ENCODE measurements at regions of chr19 and their contacts with region 1.

Region 1: GRCh38 chr19:37466798-37467607 is at the start of gene ZNF569:
- DNase-seq: peak; percentile 93
- H3K4me3 ChIP-seq: peak within 1 kb of the TSS; percentile 59 to 77 (median 59)
- H3K27ac ChIP-seq: peak within 1 kb of the TSS; percentile 40
- H3K4me1 ChIP-seq: peaks cover 5% of the 10 kb centered on the region
- H3K27me3 ChIP-seq: no peaks in the 10 kb centered on the region
- CTCF ChIP-seq: no peak
- POLR2A ChIP-seq: peak; percentile 73
- total RNA-seq, gene ZNF569: 4.4 and 5.4 TPM in 2 replicates

Region 2: DNA sequence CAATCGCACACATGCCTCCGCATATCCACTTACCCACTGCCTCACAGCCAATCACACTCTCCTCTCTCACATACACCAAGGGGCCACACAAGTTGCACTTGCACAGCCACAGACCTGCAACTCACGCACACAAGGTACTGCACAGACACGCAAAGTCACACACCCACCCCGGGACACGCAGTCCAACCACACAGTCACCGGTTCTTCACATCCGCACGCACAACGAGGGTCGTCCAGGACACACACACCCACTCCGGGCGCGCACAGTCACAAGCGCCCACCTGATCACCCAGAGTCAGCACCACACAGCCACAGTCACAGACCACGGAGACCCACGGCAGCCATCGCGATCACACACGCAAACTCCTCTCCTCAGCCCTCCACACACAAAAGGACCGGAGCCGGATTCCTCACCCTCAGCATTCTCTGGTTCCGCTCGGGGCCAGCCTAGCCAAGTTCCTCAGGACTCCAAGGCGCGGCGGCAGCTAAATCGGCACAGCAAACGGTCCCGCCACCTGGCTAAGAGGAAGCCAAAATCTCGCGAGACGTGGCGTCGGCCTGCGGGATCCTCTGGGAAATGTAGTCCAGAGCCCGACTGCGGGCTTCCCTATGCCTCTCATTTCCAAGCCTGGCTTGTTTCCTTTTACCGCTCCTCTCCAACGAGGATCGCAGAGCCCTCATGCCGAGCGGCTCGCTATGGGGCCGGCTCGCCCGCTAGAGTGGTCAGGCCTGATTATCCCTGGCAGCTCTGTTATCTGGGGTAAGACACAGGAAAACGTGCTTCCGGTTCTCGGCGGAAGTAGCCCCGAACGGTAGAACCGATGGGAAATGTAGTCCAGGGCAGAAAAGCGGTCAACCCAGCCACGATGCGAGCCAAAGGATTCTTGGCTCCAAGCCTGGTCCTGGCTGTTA is 694.4 kb before region 1 on chr19 and contains the start of gene ZNF850:
- CTCF ChIA-PET with region 1: no interaction called
- POLR2A ChIA-PET with region 1: no interaction called
- dilution Hi-C with region 1: no loop called
- intact Hi-C with region 1: loop called (anchors 5 kb)
- DNase-seq: peak; percentile 92
- H3K4me3 ChIP-seq: peak within 1 kb of the TSS; percentile 31 to 76 (median 40)
- H3K27ac ChIP-seq: peak within 1 kb of the TSS; percentile 33
- H3K4me1 ChIP-seq: peaks cover 11% of the 10 kb centered on the region
- H3K27me3 ChIP-seq: no peaks in the 10 kb centered on the region
- CTCF ChIP-seq: no peak
- POLR2A ChIP-seq: no peak
- total RNA-seq, gene ZNF850: 3.6 and 4.5 TPM in 2 replicates

Region 3: DNA sequence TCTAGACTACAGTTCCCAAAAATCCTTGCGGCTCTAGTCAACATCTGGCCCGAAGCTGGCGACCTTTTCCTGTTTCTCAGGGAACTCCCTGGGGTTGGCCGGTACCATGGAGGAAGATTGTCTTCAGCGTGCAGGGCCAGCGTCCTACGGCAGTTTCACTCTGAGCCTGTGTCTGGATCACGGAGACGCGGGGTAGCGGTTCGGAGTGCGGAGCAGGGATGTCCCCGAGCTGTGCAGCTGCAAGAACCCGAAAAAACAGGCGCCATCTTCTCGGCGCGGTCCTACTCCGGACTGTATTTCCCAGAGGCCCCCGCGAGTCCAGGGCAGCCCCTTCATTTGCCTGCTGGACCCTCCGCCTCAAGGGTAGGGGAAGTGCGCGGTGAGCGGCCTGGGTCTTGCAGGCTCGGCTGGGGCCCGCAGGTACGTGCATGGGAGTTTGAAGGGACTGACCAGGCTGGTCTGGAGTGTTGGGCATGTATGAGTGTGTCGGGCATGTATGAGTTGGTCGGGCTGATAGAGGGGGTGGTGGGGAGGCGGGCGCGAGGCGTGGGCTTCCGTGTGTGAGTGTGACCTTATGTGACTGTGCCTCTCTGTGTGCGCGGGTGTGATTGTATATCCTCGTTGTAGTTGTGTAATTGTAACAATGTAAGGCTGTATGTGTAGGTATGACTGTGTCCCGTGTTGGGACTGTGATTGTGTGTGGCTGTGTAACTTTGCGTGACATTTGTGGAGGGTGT is 249.0 kb before region 1 on chr19 and contains the start of gene ZNF383:
- CTCF ChIA-PET with region 1: no interaction called
- POLR2A ChIA-PET with region 1: no interaction called
- dilution Hi-C with region 1: no loop called
- intact Hi-C with region 1: loop called (anchors 1 kb)
- DNase-seq: peak; percentile 92
- H3K4me3 ChIP-seq: peak within 1 kb of the TSS; percentile 51 to 89 (median 56)
- H3K27ac ChIP-seq: peak within 1 kb of the TSS; percentile 39
- H3K4me1 ChIP-seq: peaks cover 5% of the 10 kb centered on the region
- H3K27me3 ChIP-seq: no peaks in the 10 kb centered on the region
- CTCF ChIP-seq: no peak
- POLR2A ChIP-seq: peak; percentile 58
- total RNA-seq, gene ZNF383: 4.9 and 7.1 TPM in 2 replicates

Region 4: GRCh38 chr19:37303591-37304550 is 163.1 kb before region 1 on chr19:
- CTCF ChIA-PET with region 1: no interaction called
- POLR2A ChIA-PET with region 1: no interaction called
- dilution Hi-C with region 1: no loop called
- intact Hi-C with region 1: no loop called
- DNase-seq: no peak
- H3K4me3 ChIP-seq: peak overlapping the region in 1 of 3 experiments; percentile 30
- H3K27ac ChIP-seq: no peak overlapping the region
- H3K4me1 ChIP-seq: no peaks in the 10 kb centered on the region
- H3K27me3 ChIP-seq: no peaks in the 10 kb centered on the region
- CTCF ChIP-seq: no peak
- POLR2A ChIP-seq: no peak

Region 5: GRCh38 chr19:37370880-37371661 is 95.9 kb before region 1 on chr19 and contains the start of gene ZNF527:
- CTCF ChIA-PET with region 1: interaction called, 4 read pairs
- POLR2A ChIA-PET with region 1: interaction called, 5 read pairs
- dilution Hi-C with region 1: no loop called
- intact Hi-C with region 1: loop called (anchors 2 kb)
- DNase-seq: peak; percentile 98
- H3K4me3 ChIP-seq: peak within 1 kb of the TSS; percentile 13 to 89 (median 72)
- H3K27ac ChIP-seq: peak within 1 kb of the TSS; percentile 14
- H3K4me1 ChIP-seq: no peaks in the 10 kb centered on the region
- H3K27me3 ChIP-seq: no peaks in the 10 kb centered on the region
- CTCF ChIP-seq: no peak
- POLR2A ChIP-seq: peak; percentile 74
- total RNA-seq, gene ZNF527: 3.4 and 3.6 TPM in 2 replicates

Region 6: GRCh38 chr19:37413243-37414084 is 53.5 kb before region 1 on chr19:
- CTCF ChIA-PET with region 1: no interaction called
- POLR2A ChIA-PET with region 1: no interaction called
- dilution Hi-C with region 1: no loop called
- intact Hi-C with region 1: no loop called
- DNase-seq: peak; percentile 28
- H3K4me3 ChIP-seq: no peak overlapping the region
- H3K27ac ChIP-seq: no peak overlapping the region
- H3K4me1 ChIP-seq: no peaks in the 10 kb centered on the region
- H3K27me3 ChIP-seq: no peaks in the 10 kb centered on the region
- CTCF ChIP-seq: no peak
- POLR2A ChIP-seq: no peak

Region 7: DNA sequence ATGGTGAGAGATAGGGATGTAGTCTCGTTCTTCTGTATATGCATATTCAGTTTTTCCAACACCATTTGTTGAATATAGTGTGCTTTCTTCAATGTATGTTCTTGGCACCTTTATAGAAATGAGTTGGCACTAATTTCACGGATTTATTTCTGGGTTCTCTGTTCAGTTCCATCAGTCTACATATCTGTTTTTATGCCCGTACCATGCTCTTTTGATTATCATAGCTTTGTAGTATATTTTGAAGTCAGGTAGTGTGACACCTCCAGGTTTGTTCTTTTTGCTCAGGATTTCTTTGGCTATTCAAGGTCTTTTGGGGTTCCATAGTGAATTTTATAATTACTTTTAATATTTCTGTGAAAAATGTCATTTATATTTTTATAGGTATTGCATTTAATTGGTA is 25.2 kb after region 1 on chr19:
- CTCF ChIA-PET with region 1: no interaction called
- POLR2A ChIA-PET with region 1: no interaction called
- dilution Hi-C with region 1: no loop called
- intact Hi-C with region 1: no loop called
- DNase-seq: no peak
- H3K4me3 ChIP-seq: no peak overlapping the region
- H3K27ac ChIP-seq: no peak overlapping the region
- H3K4me1 ChIP-seq: no peaks in the 10 kb centered on the region
- H3K27me3 ChIP-seq: no peaks in the 10 kb centered on the region
- CTCF ChIP-seq: no peak
- POLR2A ChIP-seq: no peak

Region 8: DNA sequence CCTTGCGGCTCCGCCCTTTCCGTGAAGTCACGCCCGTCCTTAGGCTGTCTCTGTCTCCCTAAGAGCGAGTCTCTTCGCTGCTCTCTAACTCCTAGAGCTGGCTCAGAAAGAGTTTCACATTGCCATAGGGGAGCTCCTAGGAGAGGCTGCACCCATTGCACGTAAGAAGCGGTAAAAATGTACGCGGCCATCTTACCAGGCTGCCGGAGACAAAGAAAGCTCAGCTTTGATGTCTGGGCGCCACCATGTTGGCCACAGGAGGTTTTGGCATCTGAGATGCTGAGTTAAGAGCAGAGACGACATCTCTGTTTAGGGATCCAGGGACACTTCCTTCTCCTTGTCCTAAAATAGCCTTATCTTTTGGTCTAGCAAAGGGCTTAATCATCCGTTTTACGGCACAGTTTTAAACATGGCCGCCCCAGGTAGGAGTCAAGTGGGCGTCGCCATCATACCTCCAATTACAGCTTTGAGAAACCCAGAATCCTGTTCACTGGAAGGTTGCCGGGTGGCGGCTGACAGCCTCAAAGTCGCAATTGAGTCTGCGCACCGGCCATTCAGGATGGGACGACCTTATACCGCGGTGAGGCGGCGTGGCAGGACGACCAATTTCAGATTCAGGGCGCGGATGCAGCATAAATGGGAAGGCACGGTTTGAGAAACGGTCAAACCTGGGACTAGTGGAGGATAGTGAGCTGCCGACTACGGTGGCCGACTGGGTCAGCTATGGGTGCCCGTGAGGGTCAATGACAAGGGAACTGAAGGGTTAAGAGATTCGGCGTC is 39.6 kb after region 1 on chr19 and contains the start of gene ZNF793:
- CTCF ChIA-PET with region 1: no interaction called
- POLR2A ChIA-PET with region 1: no interaction called
- dilution Hi-C with region 1: no loop called
- intact Hi-C with region 1: loop called (anchors 2 kb)
- DNase-seq: peak; percentile 28
- H3K4me3 ChIP-seq: peak within 1 kb of the TSS; percentile 5 to 79 (median 37)
- H3K27ac ChIP-seq: peak within 1 kb of the TSS; percentile 30
- H3K4me1 ChIP-seq: no peaks in the 10 kb centered on the region
- H3K27me3 ChIP-seq: no peaks in the 10 kb centered on the region
- CTCF ChIP-seq: no peak
- POLR2A ChIP-seq: no peak
- total RNA-seq, gene ZNF793: 0.78 and 3.8 TPM in 2 replicates

Region 9: DNA sequence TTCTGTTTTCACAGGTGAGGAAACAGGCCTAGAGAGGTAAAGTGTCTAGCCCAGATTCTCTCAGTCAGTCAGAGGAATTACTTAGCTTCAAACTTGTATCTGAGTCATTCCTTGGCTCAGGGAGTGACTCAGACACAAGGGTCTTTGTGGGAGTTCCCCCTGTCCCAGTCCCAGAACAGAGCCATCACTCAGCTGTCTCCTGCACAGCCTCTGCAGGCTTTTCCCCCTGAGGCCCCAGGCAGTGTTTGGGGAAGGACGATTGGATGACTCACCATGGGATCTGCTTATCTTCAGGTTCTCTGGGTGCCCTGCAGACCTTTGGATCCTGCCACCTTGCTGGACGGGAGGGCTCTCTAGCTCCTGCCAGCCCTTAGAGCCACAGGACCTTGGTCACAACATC is 52.9 kb after region 1 on chr19:
- CTCF ChIA-PET with region 1: no interaction called
- POLR2A ChIA-PET with region 1: no interaction called
- dilution Hi-C with region 1: no loop called
- intact Hi-C with region 1: no loop called
- DNase-seq: no peak
- H3K4me3 ChIP-seq: no peak overlapping the region
- H3K27ac ChIP-seq: no peak overlapping the region
- H3K4me1 ChIP-seq: no peaks in the 10 kb centered on the region
- H3K27me3 ChIP-seq: no peaks in the 10 kb centered on the region
- CTCF ChIP-seq: no peak
- POLR2A ChIP-seq: no peak

Region 10: GRCh38 chr19:37551129-37551993 is 84.4 kb after region 1 on chr19:
- CTCF ChIA-PET with region 1: interaction called, 5 read pairs
- POLR2A ChIA-PET with region 1: no interaction called
- dilution Hi-C with region 1: no loop called
- intact Hi-C with region 1: loop called (anchors 2 kb)
- DNase-seq: peak; percentile 57
- H3K4me3 ChIP-seq: peak overlapping the region; percentile 28 to 74 (median 64)
- H3K27ac ChIP-seq: peak overlapping the region; percentile 61
- H3K4me1 ChIP-seq: no peaks in the 10 kb centered on the region
- H3K27me3 ChIP-seq: no peaks in the 10 kb centered on the region
- CTCF ChIP-seq: peak; percentile 56 to 57
- POLR2A ChIP-seq: no peak

Region 11: DNA sequence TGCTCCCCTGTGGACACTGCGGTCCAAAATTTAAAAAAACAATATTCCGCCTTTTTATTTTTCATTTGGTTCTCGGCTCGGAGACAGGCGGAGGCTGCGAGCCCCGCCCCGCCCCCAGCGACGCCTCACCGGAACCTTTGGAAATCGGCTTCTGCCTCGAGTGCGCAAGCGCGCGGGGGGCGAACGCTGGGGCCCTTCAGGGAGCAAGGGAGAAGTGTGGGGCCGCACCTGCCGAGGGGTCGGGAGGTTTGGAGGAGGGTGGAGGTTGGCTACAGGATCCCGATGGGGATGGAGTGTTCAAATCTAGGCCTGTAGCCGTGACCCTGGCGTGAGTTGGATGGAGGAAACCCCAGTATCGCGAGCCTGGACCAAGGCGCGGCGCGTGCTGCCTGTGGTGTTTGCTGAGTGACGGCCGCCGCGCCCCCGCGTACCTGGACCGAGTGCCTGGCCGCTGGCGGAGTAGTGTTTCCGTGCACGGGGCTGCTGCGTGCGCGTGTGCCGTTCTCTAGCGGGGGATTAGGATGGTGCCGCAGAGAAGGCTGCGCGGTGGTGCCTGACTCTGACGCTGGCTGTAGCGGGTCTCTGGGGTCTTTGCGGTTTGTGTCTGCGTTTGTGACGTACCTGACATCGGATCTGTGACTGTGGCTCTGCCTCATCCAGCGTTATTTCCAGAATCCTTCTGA is 188.8 kb after region 1 on chr19:
- CTCF ChIA-PET with region 1: no interaction called
- POLR2A ChIA-PET with region 1: no interaction called
- dilution Hi-C with region 1: no loop called
- intact Hi-C with region 1: loop called (anchors 2 kb)
- DNase-seq: peak; percentile 88
- H3K4me3 ChIP-seq: peak overlapping the region; percentile 65 to 92 (median 91)
- H3K27ac ChIP-seq: peak overlapping the region; percentile 26
- H3K4me1 ChIP-seq: peaks cover 14% of the 10 kb centered on the region
- H3K27me3 ChIP-seq: no peaks in the 10 kb centered on the region
- CTCF ChIP-seq: no peak
- POLR2A ChIP-seq: peak; percentile 18

Measured in endothelial cell of umbilical vein (primary cell).